Vagina (tissue), 2 donors: ENCODE measurements at regions of chr2 and their contacts with region 1.

Region 1: GRCh38 chr2:238938401-238939055 is 90.6 kb downstream of the TWIST2 start:
- DNase-seq: peak; percentile 91 to 99
- H3K4me3 ChIP-seq: peak overlapping the region in 1 of 2 donors; percentile 12
- H3K27ac ChIP-seq: peak overlapping the region; percentile 80
- H3K4me1 ChIP-seq: peaks cover 31% of the 10 kb centered on the region
- H3K27me3 ChIP-seq: no peaks in the 10 kb centered on the region
- CTCF ChIP-seq: no peak
- POLR2A ChIP-seq: no peak

Region 2: DNA sequence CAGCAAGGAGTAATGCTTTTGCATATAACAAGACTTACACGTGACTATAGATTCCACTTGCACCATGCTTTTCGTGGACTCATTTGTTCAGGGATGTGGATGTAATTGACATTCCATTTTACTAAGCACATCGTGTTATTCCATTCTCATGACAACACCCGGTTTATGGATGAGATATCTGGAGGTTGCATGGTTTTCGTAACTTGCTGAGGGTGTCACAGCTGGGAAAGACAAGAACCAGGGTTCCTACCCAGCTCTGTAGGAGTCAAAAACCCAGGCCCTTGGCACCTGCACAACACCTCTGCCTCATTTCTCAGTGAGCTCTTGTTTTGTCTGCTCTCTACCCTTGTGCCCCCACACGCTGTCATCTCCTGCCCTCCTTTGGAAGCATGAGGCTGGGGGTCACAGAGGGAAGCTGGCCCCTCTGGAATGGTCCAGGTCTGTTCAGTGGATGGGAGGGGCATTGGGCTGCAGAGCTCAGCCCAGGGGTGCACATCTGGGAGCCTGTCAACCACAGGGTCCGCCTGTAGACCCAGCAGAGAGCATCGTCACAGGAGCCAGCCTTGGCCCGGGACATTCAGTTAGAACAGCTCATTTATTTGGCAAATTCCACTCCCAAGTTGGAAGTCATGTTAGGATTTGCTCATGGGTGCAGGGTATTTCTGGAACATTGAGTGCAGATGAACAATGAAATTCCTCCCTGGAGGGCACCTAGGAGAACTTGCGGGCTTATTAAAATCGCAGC is 210.8 kb before region 1 on chr2:
- intact Hi-C with region 1: loop called (anchors 2 kb)
- DNase-seq: peak; percentile 74 to 92
- H3K4me3 ChIP-seq: peak overlapping the region in 1 of 2 donors; percentile 2
- H3K27ac ChIP-seq: peak overlapping the region; percentile 90
- H3K4me1 ChIP-seq: peaks cover 50% of the 10 kb centered on the region
- H3K27me3 ChIP-seq: no peaks in the 10 kb centered on the region
- CTCF ChIP-seq: no peak
- POLR2A ChIP-seq: no peak

Region 3: GRCh38 chr2:238847841-238848690 is 90.5 kb before region 1 on chr2 and contains the start of gene TWIST2:
- intact Hi-C with region 1: loop called (anchors 5 kb)
- DNase-seq: peak in 1 of 2 donors; percentile 95
- H3K4me3 ChIP-seq: peak within 1 kb of the TSS; percentile 62 to 89
- H3K27ac ChIP-seq: peak within 1 kb of the TSS; percentile 94
- H3K4me1 ChIP-seq: peaks cover 12% of the 10 kb centered on the region
- H3K27me3 ChIP-seq: no peaks in the 10 kb centered on the region
- CTCF ChIP-seq: no peak
- POLR2A ChIP-seq: peak; percentile 19 to 92
- total RNA-seq, gene TWIST2: 214 TPM